Activated CD4-positive, alpha-beta T cell treated with anti-CD3 and anti-CD28 coated beads for 36 hours (primary cell): ENCODE measurements at regions of chr1 and their contacts with region 1.

Region 1: GRCh38 chr1:114750780-114751179 is 7.0 kb downstream of the CSDE1 start:
- DNase-seq: no peak
- ATAC-seq: no peak
- H3K4me3 Mint-ChIP-seq: peak overlapping the region; percentile 30
- H3K27ac Mint-ChIP-seq: peak overlapping the region; percentile 42
- H3K4me1 Mint-ChIP-seq: peaks cover 93% of the 10 kb centered on the region
- H3K27me3 Mint-ChIP-seq: no peaks in the 10 kb centered on the region

Region 2: GRCh38 chr1:114739949-114740730 is 10.6 kb before region 1 on chr1:
- CTCF ChIA-PET with region 1: interaction called, 6 read pairs
- POLR2A ChIA-PET with region 1: interaction called, 4 read pairs
- intact Hi-C with region 1: loop called in 1 of 2 experiments (anchors 1 kb)
- DNase-seq: no peak
- ATAC-seq: no peak
- H3K4me3 Mint-ChIP-seq: no peak overlapping the region
- H3K27ac Mint-ChIP-seq: no peak overlapping the region
- H3K4me1 Mint-ChIP-seq: peaks cover 39% of the 10 kb centered on the region
- H3K27me3 Mint-ChIP-seq: no peaks in the 10 kb centered on the region

Region 3: DNA sequence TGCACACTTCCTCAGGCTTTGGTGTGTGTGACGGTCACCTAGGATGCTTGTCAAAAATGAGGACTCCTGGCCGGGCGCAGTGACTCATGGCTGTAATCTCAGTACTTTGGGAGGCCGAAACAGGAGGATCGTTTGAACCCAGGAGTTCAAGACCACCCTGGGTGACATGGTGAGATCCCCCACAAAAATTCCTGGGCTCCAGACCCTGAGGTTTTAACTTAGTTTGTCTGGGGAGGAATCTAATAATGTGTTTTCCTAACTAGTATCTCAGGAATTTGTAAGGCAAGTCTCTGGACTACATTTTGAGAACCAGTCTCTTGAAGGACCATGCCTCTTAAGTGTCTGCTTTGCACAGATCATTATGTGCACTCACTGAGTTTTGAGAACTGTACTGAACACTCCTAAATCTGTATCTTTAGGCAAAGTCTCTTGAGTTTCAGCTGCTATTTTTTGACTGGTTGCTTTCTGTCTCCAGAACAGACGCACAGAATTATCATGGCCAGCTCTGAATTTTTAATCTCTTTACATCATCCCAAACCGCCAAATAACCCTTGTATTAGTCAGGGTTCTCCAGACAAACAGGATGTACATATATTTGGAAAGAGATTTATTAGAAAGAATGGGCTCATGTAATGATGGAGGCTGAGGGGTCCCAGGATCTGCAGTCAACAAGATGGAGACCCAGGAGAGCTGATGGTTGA is 845.5 kb after region 1 on chr1:
- CTCF ChIA-PET with region 1: no interaction called
- POLR2A ChIA-PET with region 1: no interaction called
- intact Hi-C with region 1: no loop called
- DNase-seq: no peak
- ATAC-seq: no peak
- H3K4me3 Mint-ChIP-seq: no peak overlapping the region
- H3K27ac Mint-ChIP-seq: no peak overlapping the region
- H3K4me1 Mint-ChIP-seq: no peaks in the 10 kb centered on the region
- H3K27me3 Mint-ChIP-seq: peaks cover 3% of the 10 kb centered on the region